ENCODE measurements at regions of chr7 and their contacts with region 1.

Region 1: GRCh38 chr7:876167-876967 is at the start of gene GET4:
- DNase-seq: peak; percentile 96 to 100 (median 99)
- H3K4me3 ChIP-seq: peak within 1 kb of the TSS; percentile 11 to 68
- H3K4me3 Mint-ChIP-seq: peak within 1 kb of the TSS; percentile 87 to 96 (median 91)
- H3K27ac ChIP-seq: peak within 1 kb of the TSS; percentile 84
- H3K27ac Mint-ChIP-seq: peak within 1 kb of the TSS; percentile 83 to 96 (median 94)
- H3K4me1 ChIP-seq: peaks cover 48% of the 10 kb centered on the region
- H3K4me1 Mint-ChIP-seq: peaks cover 18 to 42% (median 31%) of the 10 kb centered on the region in 4 donors
- H3K27me3 ChIP-seq: no peaks in the 10 kb centered on the region
- H3K27me3 Mint-ChIP-seq: no peaks in the 10 kb centered on the region
- total RNA-seq, gene GET4: 47.4 to 51.6 TPM

Region 2: GRCh38 chr7:604001-604883 is 272.1 kb before region 1 on chr7:
- CTCF ChIA-PET with region 1: no interaction called
- POLR2A ChIA-PET with region 1: no interaction called
- intact Hi-C with region 1: loop called (anchors 2 kb)
- DNase-seq: peak; percentile 86 to 97 (median 91)
- H3K4me3 ChIP-seq: peak overlapping the region; percentile 20 to 54
- H3K4me3 Mint-ChIP-seq: peak overlapping the region; percentile 87 to 95 (median 91)
- H3K27ac ChIP-seq: peak overlapping the region; percentile 98
- H3K27ac Mint-ChIP-seq: peak overlapping the region; percentile 99 to 100 (median 100)
- H3K4me1 ChIP-seq: peaks cover 64% of the 10 kb centered on the region
- H3K4me1 Mint-ChIP-seq: peaks cover 28 to 71% (median 48%) of the 10 kb centered on the region in 4 donors
- H3K27me3 ChIP-seq: no peaks in the 10 kb centered on the region
- H3K27me3 Mint-ChIP-seq: no peaks in the 10 kb centered on the region

Region 3: GRCh38 chr7:786472-787255 is 89.7 kb before region 1 on chr7:
- CTCF ChIA-PET with region 1: interaction called, 115 read pairs
- POLR2A ChIA-PET with region 1: interaction called, 5 read pairs
- intact Hi-C with region 1: loop called (anchors 1 kb)
- DNase-seq: peak; percentile 60 to 64 (median 61)
- H3K4me3 ChIP-seq: no peak overlapping the region
- H3K4me3 Mint-ChIP-seq: no peak overlapping the region
- H3K27ac ChIP-seq: no peak overlapping the region
- H3K27ac Mint-ChIP-seq: peak overlapping the region in 1 of 7 donors; percentile 32
- H3K4me1 ChIP-seq: no peaks in the 10 kb centered on the region
- H3K4me1 Mint-ChIP-seq: peaks cover 0 to 5% (median under 1%) of the 10 kb centered on the region in 4 donors
- H3K27me3 ChIP-seq: no peaks in the 10 kb centered on the region
- H3K27me3 Mint-ChIP-seq: no peaks in the 10 kb centered on the region

Region 4: GRCh38 chr7:831596-832166 is 44.7 kb before region 1 on chr7:
- CTCF ChIA-PET with region 1: interaction called, 21 read pairs
- POLR2A ChIA-PET with region 1: interaction called, 18 read pairs
- intact Hi-C with region 1: loop called (anchors 1 kb)
- DNase-seq: peak in 4 of 5 donors; percentile 39 to 58 (median 47)
- H3K4me3 ChIP-seq: peak overlapping the region in 1 of 2 donors; percentile 8
- H3K4me3 Mint-ChIP-seq: peak overlapping the region; percentile 81 to 91 (median 88)
- H3K27ac ChIP-seq: peak overlapping the region; percentile 73
- H3K27ac Mint-ChIP-seq: peak overlapping the region; percentile 96 to 99 (median 97)
- H3K4me1 ChIP-seq: peaks cover 41% of the 10 kb centered on the region
- H3K4me1 Mint-ChIP-seq: peaks cover 33 to 72% (median 49%) of the 10 kb centered on the region in 4 donors
- H3K27me3 ChIP-seq: no peaks in the 10 kb centered on the region
- H3K27me3 Mint-ChIP-seq: no peaks in the 10 kb centered on the region

Region 5: DNA sequence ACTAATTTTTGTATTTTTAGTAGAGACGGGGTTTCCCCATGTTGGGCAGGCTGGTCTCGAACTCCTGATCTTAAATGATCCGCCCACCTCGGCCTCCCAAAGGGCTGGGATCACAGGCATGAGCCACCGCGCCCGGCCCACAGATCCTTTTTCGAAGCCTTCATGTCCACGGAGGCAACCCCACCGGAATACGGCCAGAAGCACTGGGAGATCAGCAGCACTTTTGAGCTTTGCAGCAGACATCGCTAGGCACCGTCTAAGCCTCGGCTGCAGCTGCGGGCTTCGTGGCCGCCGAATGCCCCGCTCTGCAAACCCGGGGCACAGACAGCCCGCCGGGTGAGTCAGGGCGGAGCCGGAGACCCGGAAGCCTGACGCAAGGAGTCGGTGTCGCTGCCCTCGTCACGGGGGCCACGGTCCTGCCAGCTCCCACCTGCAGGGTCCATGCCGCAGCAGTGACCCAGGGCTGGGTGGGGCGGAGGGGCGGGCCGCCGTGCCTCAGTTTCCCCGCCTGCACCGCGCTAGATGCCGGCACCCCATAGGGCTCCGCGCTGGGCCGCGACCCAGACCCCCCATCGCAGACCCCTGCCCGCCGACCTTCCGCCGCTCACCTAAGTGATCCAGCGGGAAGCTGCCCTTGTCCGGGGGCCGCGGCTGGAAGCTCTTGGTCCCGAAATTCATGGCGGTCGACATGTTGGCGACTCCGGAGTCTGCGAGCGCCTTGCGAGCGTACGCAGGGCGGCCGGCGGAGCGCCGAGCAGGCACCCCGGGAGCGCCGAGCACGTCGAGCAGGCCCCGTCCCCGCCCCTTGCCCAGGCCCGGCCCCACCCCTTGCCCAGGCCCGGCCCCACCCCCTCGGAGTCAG is 98.7 kb after region 1 on chr7 and contains the start of gene COX19:
- CTCF ChIA-PET with region 1: interaction called, 3 read pairs
- POLR2A ChIA-PET with region 1: interaction called, 18 read pairs
- intact Hi-C with region 1: loop called (anchors 1 kb)
- DNase-seq: peak; percentile 87 to 94 (median 88)
- H3K4me3 ChIP-seq: peak within 1 kb of the TSS; percentile 58 to 94
- H3K4me3 Mint-ChIP-seq: peak within 1 kb of the TSS; percentile 89 to 96 (median 94)
- H3K27ac ChIP-seq: peak within 1 kb of the TSS; percentile 99
- H3K27ac Mint-ChIP-seq: peak within 1 kb of the TSS; percentile 90 to 97 (median 93)
- H3K4me1 ChIP-seq: peaks cover 38% of the 10 kb centered on the region
- H3K4me1 Mint-ChIP-seq: peaks cover 13 to 37% (median 26%) of the 10 kb centered on the region in 4 donors
- H3K27me3 ChIP-seq: no peaks in the 10 kb centered on the region
- H3K27me3 Mint-ChIP-seq: no peaks in the 10 kb centered on the region
- total RNA-seq, gene COX19: 46.2 to 50.0 TPM

Region 6: DNA sequence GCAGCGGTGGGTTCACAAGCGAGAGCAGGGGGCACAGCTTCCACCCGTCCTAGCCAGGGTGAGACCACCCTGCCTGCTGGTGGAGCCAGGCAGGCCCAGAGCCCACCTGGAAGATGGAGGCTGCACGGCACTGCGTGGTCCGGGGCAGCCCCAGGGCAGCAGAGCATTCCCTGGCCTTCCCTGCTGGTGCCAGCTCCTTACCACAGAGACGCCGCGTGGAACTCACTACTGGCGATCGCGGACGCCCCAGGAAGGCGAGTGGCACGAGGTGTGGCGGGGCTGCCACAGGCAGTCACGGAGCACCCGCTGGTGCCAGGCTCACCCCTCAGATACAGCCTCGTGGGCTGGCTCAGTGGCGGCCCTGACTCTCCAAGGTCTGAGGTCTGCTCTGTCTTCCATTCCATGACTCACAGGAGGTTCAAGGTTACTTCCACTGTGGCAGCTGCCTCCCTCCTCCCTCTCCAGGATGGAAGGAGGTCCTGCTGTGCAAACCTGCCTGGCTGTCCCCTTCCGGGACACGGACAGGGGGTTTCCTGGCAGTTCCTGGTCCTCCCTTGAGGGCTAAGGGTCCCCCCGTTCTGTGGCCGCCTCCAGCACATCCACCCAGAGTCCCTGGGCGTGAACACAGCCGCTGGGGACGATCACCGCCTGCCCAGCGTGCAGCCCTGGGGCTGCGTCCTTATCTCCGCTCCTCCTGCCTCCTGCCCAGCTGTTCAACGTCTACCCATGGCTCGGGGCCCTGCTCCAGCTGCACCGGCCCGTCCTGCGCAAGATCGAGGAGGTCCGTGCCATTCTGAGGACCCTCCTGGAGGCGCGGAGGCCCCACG is 109.8 kb after region 1 on chr7:
- CTCF ChIA-PET with region 1: no interaction called
- POLR2A ChIA-PET with region 1: no interaction called
- intact Hi-C with region 1: no loop called
- DNase-seq: no peak
- H3K4me3 ChIP-seq: no peak overlapping the region
- H3K4me3 Mint-ChIP-seq: no peak overlapping the region
- H3K27ac ChIP-seq: no peak overlapping the region
- H3K27ac Mint-ChIP-seq: no peak overlapping the region
- H3K4me1 ChIP-seq: no peaks in the 10 kb centered on the region
- H3K4me1 Mint-ChIP-seq: peaks cover 0 to 3% (median 0%) of the 10 kb centered on the region in 4 donors
- H3K27me3 ChIP-seq: no peaks in the 10 kb centered on the region
- H3K27me3 Mint-ChIP-seq: peaks cover 3 to 4% of the 10 kb centered on the region in 2 donors